Heart right ventricle (tissue), 16 donors: ENCODE measurements at regions of chrX and their contacts with region 1.

Region 1: DNA sequence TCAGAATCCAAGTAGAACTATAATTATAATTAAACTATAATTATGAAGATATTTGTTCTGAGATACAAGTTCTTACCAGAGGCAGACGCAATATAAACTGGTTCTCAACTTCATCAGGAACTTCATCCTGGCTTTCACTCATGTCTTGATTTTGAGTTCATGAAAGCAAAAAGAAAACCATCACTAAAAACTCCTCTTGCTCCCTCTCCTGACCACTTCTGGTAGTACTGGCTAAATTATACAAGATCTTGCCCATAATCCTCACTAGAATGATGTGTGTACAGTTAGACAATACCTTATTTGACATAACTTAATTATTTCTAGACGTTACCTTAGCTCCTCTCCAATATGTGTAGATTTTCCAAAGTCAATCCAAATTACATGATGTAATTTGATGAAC is 3.7 kb downstream of the TAF7L start:
- DNase-seq: peak in 1 of 2 donors; percentile 4
- ATAC-seq: no peak
- H3K4me3 ChIP-seq: no peak overlapping the region
- H3K27ac ChIP-seq: no peak overlapping the region
- H3K4me1 ChIP-seq: no peaks in the 10 kb centered on the region
- H3K27me3 ChIP-seq: peaks cover 0 to 59% (median 15%) of the 10 kb centered on the region in 7 donors
- CTCF ChIP-seq: peak in 8 of 9 donors; percentile 25 to 67 (median 57)

Region 2: DNA sequence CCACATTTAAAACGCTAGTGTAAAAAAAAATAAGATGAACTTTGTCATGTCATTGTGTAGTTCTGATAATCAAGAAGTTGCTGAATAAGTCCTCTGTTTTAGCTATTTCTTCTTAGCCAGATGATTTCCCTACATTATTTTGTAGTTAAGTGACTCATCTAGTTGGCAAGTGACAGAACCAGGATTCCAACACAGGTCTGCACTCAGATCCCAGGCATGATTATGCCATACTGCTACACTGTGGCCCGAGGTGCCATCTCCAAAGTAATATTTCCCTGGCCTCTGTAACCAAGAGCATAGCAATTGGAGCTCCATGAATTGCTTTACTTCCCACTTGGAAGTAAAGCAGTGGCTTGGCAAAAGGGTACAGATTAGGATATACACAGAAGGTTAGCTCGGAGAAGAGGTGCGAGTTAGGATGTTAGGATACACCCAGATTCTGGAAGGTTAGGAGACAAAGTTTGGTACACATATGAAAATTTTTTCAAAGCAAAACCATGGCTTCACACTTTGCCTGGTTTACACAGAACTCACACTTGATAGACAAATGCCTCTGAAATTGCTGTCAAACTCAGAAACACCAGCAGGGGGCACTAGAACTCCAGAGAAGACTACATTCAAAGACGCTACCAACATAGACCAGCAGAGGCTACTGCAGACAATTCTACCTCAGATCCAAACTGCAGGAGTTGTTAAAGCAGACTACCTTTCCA is 602.0 kb before region 1 on chrX:
- intact Hi-C with region 1: loop called in 2 of 10 experiments (anchors 10 kb)
- DNase-seq: peak in 1 of 2 donors; percentile 55
- ATAC-seq: peak in 7 of 8 donors; percentile 30 to 79 (median 71)
- H3K4me3 ChIP-seq: no peak overlapping the region
- H3K27ac ChIP-seq: no peak overlapping the region
- H3K4me1 ChIP-seq: no peaks in the 10 kb centered on the region
- H3K27me3 ChIP-seq: peaks cover 0 to 36% (median 0%) of the 10 kb centered on the region in 7 donors
- CTCF ChIP-seq: peak; percentile 48 to 83 (median 77)

Region 3: DNA sequence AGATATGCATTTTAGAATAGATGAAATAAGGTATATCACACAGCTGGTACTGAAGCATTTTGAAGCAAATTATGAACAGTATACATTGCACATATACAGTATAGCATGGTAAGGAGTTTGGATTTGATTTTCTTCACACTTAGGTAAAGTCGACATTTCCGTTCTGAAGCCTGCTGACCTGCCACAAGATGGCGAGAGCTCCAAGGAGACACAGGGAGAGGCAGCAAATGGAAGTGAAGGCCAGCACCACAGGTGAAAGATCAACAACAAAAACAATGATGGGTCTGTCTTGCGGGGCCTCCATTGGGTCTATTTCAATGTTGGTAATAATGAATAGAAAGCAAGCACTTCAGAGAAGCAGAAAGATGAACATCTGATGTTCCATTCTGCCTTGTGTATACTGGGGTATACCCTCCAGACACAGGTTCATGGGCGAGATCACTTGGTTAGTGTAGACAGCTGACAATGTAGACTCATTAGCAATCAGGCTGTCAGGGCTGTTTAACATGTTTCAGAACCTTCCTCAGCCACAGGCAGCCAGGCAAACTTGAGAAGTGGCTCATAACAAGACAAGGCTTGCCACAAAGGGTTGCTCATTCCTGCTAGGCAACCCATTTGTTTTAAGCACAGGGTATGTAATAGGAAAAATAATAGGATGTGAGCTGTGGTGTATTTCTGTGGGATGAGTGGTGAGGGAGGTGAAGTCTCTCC is 391.9 kb before region 1 on chrX:
- intact Hi-C with region 1: loop called in 3 of 10 experiments (anchors 5 to 10 kb)
- DNase-seq: peak in 1 of 2 donors; percentile 2
- ATAC-seq: peak in 1 of 8 donors; percentile 25
- H3K4me3 ChIP-seq: no peak overlapping the region
- H3K27ac ChIP-seq: no peak overlapping the region
- H3K4me1 ChIP-seq: no peaks in the 10 kb centered on the region
- H3K27me3 ChIP-seq: peaks cover 0 to 14% (median 0%) of the 10 kb centered on the region in 7 donors
- CTCF ChIP-seq: peak in 8 of 9 donors; percentile 14 to 40 (median 28)

Region 4: GRCh38 chrX:101241531-101241930 is 45.9 kb before region 1 on chrX:
- intact Hi-C with region 1: no loop called
- DNase-seq: no peak
- ATAC-seq: no peak
- H3K4me3 ChIP-seq: no peak overlapping the region
- H3K27ac ChIP-seq: no peak overlapping the region
- H3K4me1 ChIP-seq: no peaks in the 10 kb centered on the region
- H3K27me3 ChIP-seq: peaks cover 0 to 20% (median 0%) of the 10 kb centered on the region in 7 donors
- CTCF ChIP-seq: no peak